B cell (primary cell): ENCODE measurements at regions of chr16 and their contacts with region 1.

Region 1: DNA sequence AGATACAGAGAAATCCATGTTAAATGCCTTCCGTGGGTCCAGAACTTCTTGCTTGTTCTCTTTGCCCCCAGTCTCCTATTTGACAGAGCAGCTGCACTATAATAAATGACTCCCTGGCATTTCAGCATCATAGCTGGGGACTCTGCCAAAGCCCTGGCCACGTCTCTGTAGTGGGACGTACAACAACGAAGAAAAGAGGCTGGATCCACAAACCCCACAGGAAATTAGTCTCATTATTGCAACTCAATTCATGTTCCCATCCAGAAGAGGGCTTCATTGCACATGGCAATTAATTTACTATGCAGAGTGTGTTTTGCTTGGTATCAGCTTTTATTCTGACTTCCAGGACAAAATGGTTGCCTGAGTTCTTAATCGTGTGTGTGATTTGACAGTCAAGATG is 121.3 kb downstream of the CDH13 start:
- DNase-seq: peak; percentile 36
- ATAC-seq: no peak
- H3K4me3 ChIP-seq: no peak overlapping the region
- H3K4me3 Mint-ChIP-seq: no peak overlapping the region
- H3K27ac ChIP-seq: no peak overlapping the region
- H3K27ac Mint-ChIP-seq: no peak overlapping the region
- H3K4me1 ChIP-seq: peaks cover 5 to 14% of the 10 kb centered on the region in 2 donors
- H3K4me1 Mint-ChIP-seq: peaks cover 7% of the 10 kb centered on the region
- H3K27me3 ChIP-seq: no peaks in the 10 kb centered on the region
- H3K27me3 Mint-ChIP-seq: peaks cover 19% of the 10 kb centered on the region
- CTCF ChIP-seq: no peak

Region 2: DNA sequence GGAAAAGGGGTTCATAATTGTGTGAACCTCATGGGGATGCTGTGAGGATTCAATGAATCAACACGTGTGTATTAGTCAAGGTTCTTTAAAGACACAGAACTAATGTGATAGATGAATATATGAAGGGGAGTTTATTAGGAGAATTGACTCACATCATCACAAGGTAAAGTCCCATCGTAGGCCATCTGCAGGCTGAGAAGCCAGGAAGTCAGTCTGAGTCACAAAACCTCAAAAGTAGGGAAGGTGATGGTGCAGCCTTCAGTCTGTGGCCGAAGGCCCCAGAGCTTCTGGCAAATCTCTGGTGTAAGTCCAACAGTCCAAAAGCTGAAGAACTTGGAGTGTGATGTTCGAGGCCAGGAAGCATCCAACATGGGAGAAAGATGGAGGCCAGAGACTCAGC is 292.1 kb after region 1 on chr16:
- CTCF ChIA-PET with region 1: no interaction called
- POLR2A ChIA-PET with region 1: no interaction called
- intact Hi-C with region 1: no loop called
- DNase-seq: no peak
- ATAC-seq: no peak
- H3K4me3 ChIP-seq: no peak overlapping the region
- H3K4me3 Mint-ChIP-seq: no peak overlapping the region
- H3K27ac ChIP-seq: no peak overlapping the region
- H3K27ac Mint-ChIP-seq: no peak overlapping the region
- H3K4me1 ChIP-seq: no peaks in the 10 kb centered on the region
- H3K4me1 Mint-ChIP-seq: no peaks in the 10 kb centered on the region
- H3K27me3 ChIP-seq: peaks cover 0 to 4% (median 0%) of the 10 kb centered on the region in 4 experiments
- H3K27me3 Mint-ChIP-seq: no peaks in the 10 kb centered on the region
- CTCF ChIP-seq: no peak

Region 3: GRCh38 chr16:83215406-83216001 is 467.5 kb after region 1 on chr16:
- CTCF ChIA-PET with region 1: no interaction called
- POLR2A ChIA-PET with region 1: no interaction called
- intact Hi-C with region 1: loop called (anchors 10 kb)
- DNase-seq: peak; percentile 42
- ATAC-seq: no peak
- H3K4me3 ChIP-seq: no peak overlapping the region
- H3K4me3 Mint-ChIP-seq: no peak overlapping the region
- H3K27ac ChIP-seq: no peak overlapping the region
- H3K27ac Mint-ChIP-seq: no peak overlapping the region
- H3K4me1 ChIP-seq: no peaks in the 10 kb centered on the region
- H3K4me1 Mint-ChIP-seq: no peaks in the 10 kb centered on the region
- H3K27me3 ChIP-seq: peaks cover 0 to 2% (median 0%) of the 10 kb centered on the region in 4 experiments
- H3K27me3 Mint-ChIP-seq: no peaks in the 10 kb centered on the region
- CTCF ChIP-seq: peak; percentile 67